Activated B cell treated with CpG ODN at 0.5 μM for 24 hours (primary cell): ENCODE measurements at regions of chr9 and their contacts with region 1.

Region 1: DNA sequence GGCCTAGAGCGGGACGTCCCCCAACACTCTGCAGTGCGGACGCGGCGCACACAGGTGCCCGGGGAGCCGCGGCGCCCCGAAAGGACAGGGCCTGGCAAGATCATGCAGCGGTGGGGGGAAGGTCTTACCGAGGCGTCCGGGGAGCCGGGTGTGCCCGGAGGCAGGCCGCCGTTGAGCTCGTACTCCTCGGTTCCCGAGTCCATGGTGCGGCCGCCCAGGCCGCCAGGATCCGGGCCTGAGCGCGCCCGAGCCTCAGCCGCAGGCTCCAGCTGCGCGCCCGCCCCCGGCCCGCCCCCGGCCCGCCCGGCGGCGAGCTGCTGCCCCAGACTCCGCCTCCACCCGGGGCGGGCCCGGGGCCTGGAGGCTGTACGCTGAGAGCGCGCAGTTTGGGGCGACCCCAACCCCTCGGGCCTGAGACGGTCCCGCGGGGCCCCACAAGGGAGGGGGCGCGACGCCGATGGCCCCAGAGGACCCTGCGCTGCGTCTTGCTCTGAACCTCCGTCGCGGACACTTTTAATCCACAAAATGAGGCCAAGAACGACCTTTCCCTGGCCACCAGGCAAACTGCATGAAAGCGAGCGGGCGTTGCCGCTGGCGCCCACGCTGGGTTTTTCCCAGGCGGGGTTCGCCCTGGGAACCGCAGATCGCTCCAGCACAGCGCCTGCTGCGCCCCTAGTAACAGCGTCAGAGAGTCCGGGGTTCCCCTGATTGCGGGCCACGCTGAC is at the start of gene NINJ1:
- DNase-seq: peak; percentile 75
- ATAC-seq: peak; percentile 85
- H3K4me3 Mint-ChIP-seq: peak within 1 kb of the TSS; percentile 85
- H3K27ac Mint-ChIP-seq: peak within 1 kb of the TSS; percentile 80
- H3K4me1 Mint-ChIP-seq: peaks cover 48% of the 10 kb centered on the region
- H3K27me3 Mint-ChIP-seq: no peaks in the 10 kb centered on the region
- CTCF ChIP-seq: no peak
- total RNA-seq, gene NINJ1: 10.2 and 11.0 TPM in 2 replicates

Region 2: DNA sequence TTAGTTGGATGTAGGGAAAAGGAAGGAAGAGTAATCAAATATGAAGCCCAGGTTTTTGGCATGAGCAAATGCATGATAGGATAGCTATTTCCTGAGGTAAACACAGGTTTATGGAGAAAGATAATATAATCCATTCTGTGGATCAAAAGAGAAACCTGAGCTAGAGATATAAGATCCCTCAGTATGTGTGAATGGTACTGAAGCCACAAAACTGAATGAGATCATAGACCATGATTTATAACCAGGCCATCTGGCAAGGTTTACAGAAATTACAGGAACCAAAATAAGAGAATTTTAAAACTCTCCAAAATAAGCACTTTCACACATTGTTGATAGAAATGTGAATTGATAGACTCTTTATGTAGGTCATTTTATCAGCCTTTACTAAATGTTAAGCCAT is 569.7 kb before region 1 on chr9:
- CTCF ChIA-PET with region 1: no interaction called
- POLR2A ChIA-PET with region 1: no interaction called
- intact Hi-C with region 1: no loop called
- DNase-seq: no peak
- ATAC-seq: no peak
- H3K4me3 Mint-ChIP-seq: no peak overlapping the region
- H3K27ac Mint-ChIP-seq: no peak overlapping the region
- H3K4me1 Mint-ChIP-seq: no peaks in the 10 kb centered on the region
- H3K27me3 Mint-ChIP-seq: no peaks in the 10 kb centered on the region
- CTCF ChIP-seq: no peak

Region 3: DNA sequence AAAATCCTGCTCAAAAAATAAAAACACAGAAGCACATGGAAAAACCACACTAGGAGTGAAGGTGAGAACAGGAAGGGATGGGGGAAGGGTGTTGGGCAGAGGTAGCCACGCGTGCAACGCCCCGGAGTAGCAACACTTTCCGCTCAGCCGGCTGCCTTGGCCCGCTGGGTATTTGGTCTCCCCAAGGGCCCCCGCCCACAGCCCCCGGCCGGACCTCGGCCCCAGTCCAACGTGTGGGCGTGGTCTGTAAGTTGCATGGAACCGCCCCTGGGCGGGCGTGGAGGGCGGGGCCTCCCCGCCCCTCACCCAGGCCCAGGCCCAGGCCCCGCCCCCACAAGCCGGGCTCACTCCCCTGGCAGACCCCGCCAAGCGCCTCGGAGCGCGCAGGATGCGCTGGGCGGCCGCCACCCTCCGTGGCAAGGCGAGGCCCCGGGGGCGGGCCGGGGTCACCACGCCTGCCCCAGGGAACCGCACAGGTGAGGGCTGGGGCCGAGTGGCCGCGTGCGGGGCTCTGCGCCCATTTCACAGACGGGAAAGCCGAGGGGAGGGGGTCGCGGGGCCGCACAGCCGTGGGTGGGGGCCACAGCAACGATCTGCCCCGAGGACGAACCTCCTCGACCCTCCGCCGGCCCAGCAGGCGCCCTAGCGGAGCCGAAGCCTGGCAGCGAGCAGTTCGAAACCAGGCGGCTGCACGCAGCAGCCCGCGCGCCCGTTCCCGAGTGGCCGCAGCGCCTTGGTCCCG is 75.7 kb before region 1 on chr9 and contains the start of gene SUSD3:
- CTCF ChIA-PET with region 1: no interaction called
- POLR2A ChIA-PET with region 1: interaction called, 6 read pairs
- intact Hi-C with region 1: loop called (anchors 2 kb)
- DNase-seq: peak; percentile 73
- ATAC-seq: peak; percentile 75
- H3K4me3 Mint-ChIP-seq: peak within 1 kb of the TSS; percentile 87
- H3K27ac Mint-ChIP-seq: peak within 1 kb of the TSS; percentile 95
- H3K4me1 Mint-ChIP-seq: peaks cover 63% of the 10 kb centered on the region
- H3K27me3 Mint-ChIP-seq: no peaks in the 10 kb centered on the region
- CTCF ChIP-seq: no peak
- total RNA-seq, gene SUSD3: 9.1 and 12.9 TPM in 2 replicates

Region 4: DNA sequence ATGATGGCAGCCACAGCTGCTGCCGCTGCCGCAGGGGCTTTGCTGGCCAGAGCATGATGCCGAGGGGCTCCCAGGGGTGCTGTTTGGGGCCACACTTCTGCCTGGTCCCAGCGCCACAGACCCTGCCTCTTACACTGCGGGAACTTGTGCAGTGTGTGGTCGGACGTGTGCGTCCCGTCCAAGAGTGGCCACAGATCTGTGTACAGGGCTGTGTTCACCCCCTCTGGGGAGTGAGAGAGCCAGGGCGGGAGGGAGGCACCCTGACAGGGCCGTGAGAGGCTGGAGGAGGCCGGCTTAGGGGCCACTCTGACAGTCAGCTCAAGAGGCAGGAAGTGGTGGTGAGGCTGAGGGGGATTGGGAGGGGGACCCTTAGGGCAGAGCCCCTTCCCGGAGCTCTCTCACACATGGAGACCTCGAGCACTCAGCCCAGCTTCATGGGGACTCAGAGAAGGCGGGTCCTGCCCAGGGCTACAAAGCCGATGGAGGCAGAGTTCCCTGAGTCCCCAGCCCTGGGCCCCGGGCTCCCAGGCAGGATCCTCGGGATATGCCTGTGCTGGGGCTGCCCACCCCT is 51.3 kb before region 1 on chr9:
- CTCF ChIA-PET with region 1: no interaction called
- POLR2A ChIA-PET with region 1: no interaction called
- intact Hi-C with region 1: no loop called
- DNase-seq: no peak
- ATAC-seq: no peak
- H3K4me3 Mint-ChIP-seq: no peak overlapping the region
- H3K27ac Mint-ChIP-seq: no peak overlapping the region
- H3K4me1 Mint-ChIP-seq: peaks cover under 1% of the 10 kb centered on the region
- H3K27me3 Mint-ChIP-seq: no peaks in the 10 kb centered on the region
- CTCF ChIP-seq: no peak

Region 5: GRCh38 chr9:93095205-93096130 is 38.7 kb before region 1 on chr9:
- CTCF ChIA-PET with region 1: no interaction called
- POLR2A ChIA-PET with region 1: interaction called, 6 read pairs
- intact Hi-C with region 1: loop called (anchors 1 kb)
- DNase-seq: peak; percentile 100
- ATAC-seq: peak; percentile 79
- H3K4me3 Mint-ChIP-seq: peak overlapping the region; percentile 86
- H3K27ac Mint-ChIP-seq: peak overlapping the region; percentile 99
- H3K4me1 Mint-ChIP-seq: peaks cover 83% of the 10 kb centered on the region
- H3K27me3 Mint-ChIP-seq: no peaks in the 10 kb centered on the region
- CTCF ChIP-seq: no peak

Region 6: GRCh38 chr9:93119953-93120845 is 14.0 kb before region 1 on chr9:
- CTCF ChIA-PET with region 1: interaction called, 4 read pairs
- POLR2A ChIA-PET with region 1: interaction called, 15 read pairs
- intact Hi-C with region 1: loop called (anchors 1 kb)
- DNase-seq: no peak
- ATAC-seq: peak; percentile 93
- H3K4me3 Mint-ChIP-seq: peak overlapping the region; percentile 67
- H3K27ac Mint-ChIP-seq: peak overlapping the region; percentile 72
- H3K4me1 Mint-ChIP-seq: peaks cover 21% of the 10 kb centered on the region
- H3K27me3 Mint-ChIP-seq: no peaks in the 10 kb centered on the region
- CTCF ChIP-seq: no peak

Region 7: GRCh38 chr9:93159601-93160471 is 25.7 kb after region 1 on chr9:
- CTCF ChIA-PET with region 1: no interaction called
- POLR2A ChIA-PET with region 1: interaction called, 5 read pairs
- intact Hi-C with region 1: loop called (anchors 1 kb)
- DNase-seq: peak; percentile 70
- ATAC-seq: peak; percentile 98
- H3K4me3 Mint-ChIP-seq: no peak overlapping the region
- H3K27ac Mint-ChIP-seq: no peak overlapping the region
- H3K4me1 Mint-ChIP-seq: peaks cover 7% of the 10 kb centered on the region
- H3K27me3 Mint-ChIP-seq: no peaks in the 10 kb centered on the region
- CTCF ChIP-seq: peak; percentile 88

Region 8: GRCh38 chr9:93774331-93775102 is 640.3 kb after region 1 on chr9:
- CTCF ChIA-PET with region 1: no interaction called
- POLR2A ChIA-PET with region 1: no interaction called
- intact Hi-C with region 1: no loop called
- DNase-seq: no peak
- ATAC-seq: no peak
- H3K4me3 Mint-ChIP-seq: no peak overlapping the region
- H3K27ac Mint-ChIP-seq: no peak overlapping the region
- H3K4me1 Mint-ChIP-seq: no peaks in the 10 kb centered on the region
- H3K27me3 Mint-ChIP-seq: peaks cover 4% of the 10 kb centered on the region
- CTCF ChIP-seq: no peak